ENCODE measurements at regions of chr19 and their contacts with region 1.

Region 1: DNA sequence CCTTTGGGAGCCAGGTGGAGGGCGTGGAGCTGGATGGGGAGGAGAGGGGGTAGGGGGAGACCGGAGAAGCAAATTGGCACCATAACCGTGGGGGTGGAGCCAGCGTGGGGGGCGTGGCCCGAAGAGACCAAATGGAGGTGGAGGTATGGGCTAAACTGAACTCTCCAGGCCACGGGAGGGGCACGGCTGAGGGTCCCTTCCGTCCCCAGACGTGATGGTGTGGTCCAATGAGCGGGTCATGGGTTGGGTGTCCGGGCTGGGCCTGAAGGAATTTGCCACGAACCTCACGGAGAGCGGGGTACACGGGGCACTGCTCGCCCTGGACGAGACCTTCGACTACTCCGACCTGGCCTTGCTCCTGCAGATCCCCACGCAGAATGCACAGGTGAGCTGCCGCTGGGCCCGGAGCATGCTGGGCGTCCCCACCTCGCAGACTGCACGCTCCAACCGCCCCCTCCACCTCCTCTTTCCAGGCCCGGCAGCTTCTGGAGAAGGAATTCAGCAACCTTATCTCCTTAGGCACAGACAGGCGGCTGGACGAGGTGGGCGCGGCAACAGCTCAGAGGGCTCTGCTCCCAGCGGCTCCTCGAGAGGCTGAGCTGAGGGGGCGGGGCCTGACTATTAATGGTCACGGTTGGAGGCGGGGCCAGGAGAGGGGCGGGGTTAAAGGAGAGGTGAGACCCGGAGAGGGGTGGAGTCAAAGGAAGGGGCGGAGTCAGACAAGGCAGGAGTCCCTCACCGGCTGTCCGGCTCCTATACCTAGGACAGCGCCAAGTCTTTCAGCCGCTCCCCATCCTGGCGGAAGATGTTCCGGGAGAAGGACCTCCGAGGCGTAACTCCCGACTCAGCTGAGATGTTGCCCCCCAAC is 6.2 kb downstream of the HRC start:
- DNase-seq: peak; percentile 88 to 98
- H3K4me3 ChIP-seq: peak overlapping the region; percentile 55 to 89
- H3K27ac ChIP-seq: peak overlapping the region; percentile 71 to 82
- H3K4me1 ChIP-seq: peaks cover 5 to 26% of the 10 kb centered on the region in 2 donors
- H3K27me3 ChIP-seq: no peaks in the 10 kb centered on the region
- CTCF ChIP-seq: no peak

Region 2: GRCh38 chr19:48780631-48781391 is 368.2 kb before region 1 on chr19:
- intact Hi-C with region 1: loop called (anchors 10 kb)
- DNase-seq: no peak
- H3K4me3 ChIP-seq: no peak overlapping the region
- H3K27ac ChIP-seq: no peak overlapping the region
- H3K4me1 ChIP-seq: no peaks in the 10 kb centered on the region
- H3K27me3 ChIP-seq: no peaks in the 10 kb centered on the region
- CTCF ChIP-seq: no peak

Region 3: DNA sequence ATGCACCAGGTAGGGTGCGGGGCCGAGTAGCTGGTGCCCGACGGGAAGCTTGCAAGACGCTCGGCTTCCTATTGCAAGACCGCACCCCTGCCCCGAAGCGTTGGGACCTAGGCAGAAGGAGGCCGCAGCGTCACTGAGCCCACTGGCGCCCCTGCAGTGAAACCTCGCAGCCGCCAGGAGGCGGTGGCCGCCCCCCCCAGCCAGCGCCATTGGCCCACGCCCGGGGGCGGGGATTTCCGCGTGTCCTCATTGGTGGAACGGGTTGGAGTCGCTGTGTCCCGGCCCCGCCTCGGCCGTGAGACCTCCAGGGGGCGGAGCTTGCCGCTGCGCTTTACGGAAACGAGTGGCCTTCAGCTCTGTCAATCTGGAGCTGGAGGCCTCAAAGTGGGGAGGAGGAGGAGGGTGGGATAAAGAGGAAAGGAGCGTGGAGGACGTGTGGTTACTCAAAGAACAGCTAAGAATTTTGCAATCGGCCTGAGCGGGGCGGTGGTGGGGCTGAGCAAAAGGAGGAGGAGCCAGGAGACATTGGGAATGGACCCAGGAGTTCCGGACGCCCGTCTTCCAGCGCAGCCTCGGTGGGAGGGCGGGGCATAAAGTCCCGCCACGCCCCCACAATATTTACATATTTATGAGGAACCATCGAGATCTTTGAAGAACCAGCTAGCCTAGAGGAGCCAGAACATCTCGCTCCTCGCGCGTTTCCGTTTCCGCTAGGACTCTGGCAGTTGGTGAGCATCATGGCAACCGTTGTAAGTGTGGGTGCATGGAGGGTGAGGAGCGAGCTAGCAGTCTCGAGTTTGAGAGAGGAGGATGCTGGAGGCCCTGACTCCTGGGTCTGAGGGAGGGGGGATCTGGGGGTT is 155.6 kb before region 1 on chr19 and contains the starts of genes GYS1 and RUVBL2:
- intact Hi-C with region 1: loop called (anchors 5 kb)
- DNase-seq: peak; percentile 99 to 100
- H3K4me3 ChIP-seq: peak within 1 kb of the TSS; percentile 58 to 81
- H3K27ac ChIP-seq: peak within 1 kb of the TSS; percentile 94
- H3K4me1 ChIP-seq: peaks cover 21 to 26% of the 10 kb centered on the region in 2 donors
- H3K27me3 ChIP-seq: no peaks in the 10 kb centered on the region
- CTCF ChIP-seq: peak; percentile 98 to 100 (median 99)
- total RNA-seq, gene GYS1: 21.8 TPM
- total RNA-seq, gene RUVBL2: 106 TPM

Region 4: GRCh38 chr19:49097455-49098288 is 51.3 kb before region 1 on chr19:
- intact Hi-C with region 1: loop called (anchors 1 kb)
- DNase-seq: peak in 1 of 2 donors; percentile 80
- H3K4me3 ChIP-seq: no peak overlapping the region
- H3K27ac ChIP-seq: no peak overlapping the region
- H3K4me1 ChIP-seq: no peaks in the 10 kb centered on the region
- H3K27me3 ChIP-seq: no peaks in the 10 kb centered on the region
- CTCF ChIP-seq: peak; percentile 95 to 99 (median 98)

Region 5: GRCh38 chr19:49118565-49119410 is 30.2 kb before region 1 on chr19 and contains the start of gene C19orf73:
- intact Hi-C with region 1: loop called (anchors 1 kb)
- DNase-seq: peak; percentile 81 to 97
- H3K4me3 ChIP-seq: peak within 1 kb of the TSS; percentile 63 to 73
- H3K27ac ChIP-seq: peak within 1 kb of the TSS; percentile 93 to 96
- H3K4me1 ChIP-seq: peaks cover 14 to 22% of the 10 kb centered on the region in 2 donors
- H3K27me3 ChIP-seq: no peaks in the 10 kb centered on the region
- CTCF ChIP-seq: peak in 1 of 3 experiments; percentile 11
- total RNA-seq, gene C19orf73: not detected

Region 6: GRCh38 chr19:49200238-49200862 is 51.3 kb after region 1 on chr19:
- intact Hi-C with region 1: loop called (anchors 1 kb)
- DNase-seq: no peak
- H3K4me3 ChIP-seq: no peak overlapping the region
- H3K27ac ChIP-seq: no peak overlapping the region
- H3K4me1 ChIP-seq: no peaks in the 10 kb centered on the region
- H3K27me3 ChIP-seq: no peaks in the 10 kb centered on the region
- CTCF ChIP-seq: no peak

Measured in ascending aorta (tissue), 2 donors.